MCF 10A (cell line): ENCODE measurements at regions of chr4 and their contacts with region 1.

Region 1: DNA sequence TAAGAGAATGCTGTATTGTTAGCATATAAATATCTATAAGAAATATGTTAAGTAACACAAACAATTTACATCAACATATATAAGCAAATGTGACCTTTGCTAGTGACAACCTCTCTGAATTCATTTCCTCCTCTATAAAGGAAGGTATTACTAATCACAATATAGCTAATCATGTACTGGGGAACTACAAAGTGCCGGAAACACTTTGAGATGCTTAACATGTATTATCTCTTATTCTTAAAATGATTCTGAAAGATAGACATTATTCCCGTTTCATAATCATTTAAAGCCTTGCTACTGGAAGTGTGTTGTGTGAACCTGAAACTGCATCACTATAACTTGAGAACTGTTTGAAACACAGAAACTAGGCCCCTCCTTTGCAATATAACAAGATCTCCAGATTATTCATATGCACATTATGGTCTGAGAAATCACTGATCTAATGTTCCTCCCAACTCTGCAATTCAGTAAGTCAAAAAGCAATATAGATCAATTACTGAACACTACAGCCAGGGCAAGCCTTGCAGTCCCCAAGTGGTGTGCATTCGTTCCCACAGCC is 54.0 kb downstream of the KLHL8 start:
- DNase-seq: no peak
- H3K4me3 Mint-ChIP-seq: no peak overlapping the region
- H3K27ac Mint-ChIP-seq: no peak overlapping the region
- H3K4me1 Mint-ChIP-seq: no peaks in the 10 kb centered on the region
- H3K27me3 Mint-ChIP-seq: no peaks in the 10 kb centered on the region
- CTCF ChIP-seq: no peak

Region 2: DNA sequence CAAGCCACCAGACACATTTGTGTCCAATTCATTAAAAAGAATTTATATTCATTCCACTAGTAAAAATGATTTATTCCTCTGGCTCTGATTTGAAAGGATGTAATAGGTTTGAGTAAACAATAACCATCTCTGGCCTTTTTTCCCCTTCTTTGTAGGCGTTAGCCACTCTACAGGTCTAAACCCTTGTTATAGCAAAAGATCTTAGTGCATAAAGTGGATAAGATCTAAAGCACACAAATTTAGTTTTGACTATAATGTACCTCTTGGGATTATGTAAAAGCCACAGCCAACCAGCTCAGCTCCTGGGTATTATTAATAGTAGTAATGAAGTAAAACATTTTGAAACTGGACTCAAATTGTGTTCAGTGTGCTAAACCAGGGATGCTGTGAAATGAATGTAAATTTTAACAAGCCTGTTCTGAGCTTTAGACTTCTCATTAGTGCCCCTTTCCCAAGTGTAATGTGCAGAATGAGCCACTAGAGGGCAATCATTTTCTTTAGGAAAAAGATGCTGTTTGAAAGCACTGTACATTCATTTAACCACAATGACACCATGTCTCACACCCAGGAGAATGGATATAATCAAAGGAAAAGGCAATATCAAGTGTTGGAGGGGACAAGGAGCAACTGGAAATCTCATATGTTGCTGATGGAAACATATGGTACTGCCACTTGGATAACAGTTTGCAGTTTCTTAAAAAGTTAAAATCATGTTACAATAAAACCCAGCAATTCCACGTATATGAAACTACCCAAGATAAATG is 15.7 kb before region 1 on chr4:
- CTCF ChIA-PET with region 1: interaction called, 12 read pairs
- POLR2A ChIA-PET with region 1: interaction called, 3 read pairs
- intact Hi-C with region 1: no loop called
- DNase-seq: peak; percentile 85
- H3K4me3 Mint-ChIP-seq: no peak overlapping the region
- H3K27ac Mint-ChIP-seq: no peak overlapping the region
- H3K4me1 Mint-ChIP-seq: peaks cover 11% of the 10 kb centered on the region
- H3K27me3 Mint-ChIP-seq: no peaks in the 10 kb centered on the region
- CTCF ChIP-seq: peak; percentile 81